ENCODE measurements at regions of chr9 and their contacts with region 1.

Region 1: GRCh38 chr9:113454914-113455761 is 8.4 kb upstream of the RGS3 start:
- DNase-seq: no peak
- ATAC-seq: no peak
- H3K4me3 Mint-ChIP-seq: no peak overlapping the region
- H3K27ac Mint-ChIP-seq: no peak overlapping the region
- H3K4me1 Mint-ChIP-seq: no peaks in the 10 kb centered on the region
- H3K27me3 Mint-ChIP-seq: no peaks in the 10 kb centered on the region
- CTCF ChIP-seq: no peak

Region 2: GRCh38 chr9:113247640-113248039 is 207.5 kb before region 1 on chr9:
- CTCF ChIA-PET with region 1: no interaction called
- POLR2A ChIA-PET with region 1: no interaction called
- intact Hi-C with region 1: no loop called
- DNase-seq: no peak
- ATAC-seq: no peak
- H3K4me3 Mint-ChIP-seq: no peak overlapping the region
- H3K27ac Mint-ChIP-seq: no peak overlapping the region
- H3K4me1 Mint-ChIP-seq: peaks cover 3% of the 10 kb centered on the region
- H3K27me3 Mint-ChIP-seq: no peaks in the 10 kb centered on the region
- CTCF ChIP-seq: no peak

Region 3: DNA sequence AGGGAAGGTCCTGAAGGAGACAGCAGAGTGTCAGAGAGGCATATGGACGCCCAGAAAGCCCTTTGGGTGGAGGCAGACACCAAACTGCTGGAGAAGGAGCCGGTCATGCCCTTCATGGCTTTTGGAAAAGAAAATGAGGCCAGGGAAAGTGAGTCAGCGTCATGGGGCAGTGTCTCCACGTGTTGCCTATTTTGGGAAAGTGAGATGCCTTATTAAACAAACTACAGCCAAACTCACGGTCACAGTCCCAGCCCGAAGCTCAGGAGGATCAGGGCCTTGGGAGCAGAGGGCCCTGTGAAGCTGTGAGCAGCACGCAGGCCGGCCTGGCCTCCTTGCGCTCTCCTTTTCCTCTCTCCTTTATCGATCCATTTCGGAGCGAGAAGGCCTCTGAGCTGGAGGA is 33.4 kb after region 1 on chr9:
- CTCF ChIA-PET with region 1: no interaction called
- POLR2A ChIA-PET with region 1: interaction called, 13 read pairs
- intact Hi-C with region 1: no loop called
- DNase-seq: peak; percentile 11
- ATAC-seq: no peak
- H3K4me3 Mint-ChIP-seq: no peak overlapping the region
- H3K27ac Mint-ChIP-seq: no peak overlapping the region
- H3K4me1 Mint-ChIP-seq: no peaks in the 10 kb centered on the region
- H3K27me3 Mint-ChIP-seq: no peaks in the 10 kb centered on the region
- CTCF ChIP-seq: no peak

Measured in activated B cell treated with CpG ODN at 0.5 μM for 24 hours (primary cell).